H1 (cell line): ENCODE measurements at regions of chr3 and their contacts with region 1.

Region 1: DNA sequence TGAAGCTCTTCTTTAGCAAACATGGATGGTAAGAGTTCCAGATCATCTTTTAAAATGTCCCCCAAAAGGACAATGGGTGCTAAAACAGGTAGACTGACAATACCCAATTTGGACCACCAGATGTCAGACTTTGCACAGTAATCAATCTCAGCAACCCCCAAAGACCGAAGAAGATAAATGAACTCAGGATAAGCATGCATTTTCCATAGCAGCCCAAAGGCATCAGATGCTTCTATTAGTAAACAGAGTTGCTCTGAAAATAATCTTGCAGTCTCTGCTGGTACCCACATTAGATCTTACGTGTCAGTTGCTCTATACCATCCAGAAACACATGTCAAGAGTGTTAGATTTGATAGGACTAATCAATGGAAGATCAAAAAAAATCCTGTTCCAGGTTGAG is 20.6 kb downstream of the MYH15 start:
- DNase-seq: no peak
- H3K4me3 ChIP-seq: no peak overlapping the region
- H3K27ac ChIP-seq: no peak overlapping the region
- H3K4me1 ChIP-seq: peaks cover 0 to 9% (median 8%) of the 10 kb centered on the region in 4 experiments; a peak in 4 of 7 replicates
- H3K27me3 ChIP-seq: no peaks in the 10 kb centered on the region
- CTCF ChIP-seq: peak in 2 of 3 experiments; percentile 77 to 78; a peak in 3 of 4 replicates
- EP300 ChIP-seq: no peak
- POLR2A ChIP-seq: no peak
- RAD21 ChIP-seq: peak; percentile 94 to 96

Region 2: DNA sequence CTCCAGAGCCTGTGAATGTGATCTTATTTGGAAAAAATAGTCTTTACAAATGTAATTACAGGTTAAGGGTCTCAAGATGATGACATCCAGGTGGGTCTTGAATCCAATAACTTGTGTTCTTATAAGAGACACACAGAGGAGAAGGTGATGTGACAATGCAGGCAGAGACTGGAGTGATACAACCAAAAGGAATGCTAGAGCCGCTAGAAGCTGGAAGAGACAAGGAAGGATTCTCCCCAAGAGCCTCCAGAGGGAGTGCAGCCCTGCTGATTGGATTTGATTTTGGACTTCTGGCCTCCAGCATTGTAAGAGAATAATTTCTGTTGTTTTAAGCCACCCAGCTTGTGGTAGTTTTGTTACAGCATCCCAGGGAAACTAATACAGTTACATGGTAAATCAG is 11.0 kb after region 1 on chr3:
- CTCF ChIA-PET with region 1: interaction called, 34 read pairs
- POLR2A ChIA-PET with region 1: interaction called, 3 read pairs
- DNase-seq: no peak
- H3K4me3 ChIP-seq: no peak overlapping the region
- H3K27ac ChIP-seq: no peak overlapping the region
- H3K4me1 ChIP-seq: no peaks in the 10 kb centered on the region
- H3K27me3 ChIP-seq: no peaks in the 10 kb centered on the region
- CTCF ChIP-seq: no peak
- EP300 ChIP-seq: no peak
- POLR2A ChIP-seq: no peak
- RAD21 ChIP-seq: no peak

Region 3: GRCh38 chr3:108505811-108506210 is 16.0 kb after region 1 on chr3:
- CTCF ChIA-PET with region 1: interaction called, 34 read pairs
- POLR2A ChIA-PET with region 1: no interaction called
- DNase-seq: no peak
- H3K4me3 ChIP-seq: no peak overlapping the region
- H3K27ac ChIP-seq: no peak overlapping the region
- H3K4me1 ChIP-seq: no peaks in the 10 kb centered on the region
- H3K27me3 ChIP-seq: no peaks in the 10 kb centered on the region
- CTCF ChIP-seq: peak in 2 of 3 experiments; percentile 37 to 39; a peak in 3 of 4 replicates
- EP300 ChIP-seq: no peak
- POLR2A ChIP-seq: no peak
- RAD21 ChIP-seq: peak; percentile 51 to 62